ENCODE measurements at regions of chr3 and their contacts with region 1.

Region 1: DNA sequence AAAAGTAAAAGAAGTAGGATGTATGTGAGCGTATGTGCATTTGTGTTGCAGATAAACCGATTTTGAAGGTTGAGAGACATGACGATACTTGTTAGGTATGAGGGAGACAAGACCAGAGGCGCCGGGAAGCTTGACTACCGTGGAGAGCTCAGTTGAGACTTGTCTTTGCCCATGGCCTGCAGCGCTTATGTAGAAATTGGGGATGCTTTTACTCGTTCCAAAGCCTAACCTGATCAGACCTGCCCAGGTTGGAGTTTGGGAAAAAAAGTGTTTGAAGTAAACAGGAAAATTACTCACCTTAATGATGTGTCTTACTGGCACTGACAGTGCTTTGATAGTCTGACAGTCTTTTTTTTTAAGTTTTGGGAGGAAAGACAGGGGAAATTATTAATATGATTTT is 202.8 kb downstream of the TP63 start:
- DNase-seq: peak in 1 of 2 donors; percentile 89
- H3K4me3 ChIP-seq: no peak overlapping the region
- H3K27ac ChIP-seq: peak overlapping the region; percentile 54 to 71
- H3K4me1 ChIP-seq: no peaks in the 10 kb centered on the region
- H3K27me3 ChIP-seq: no peaks in the 10 kb centered on the region
- CTCF ChIP-seq: no peak
- POLR2A ChIP-seq: no peak

Region 2: GRCh38 chr3:189547448-189547847 is 286.5 kb before region 1 on chr3:
- intact Hi-C with region 1: loop called (anchors 5 kb)
- DNase-seq: no peak
- H3K4me3 ChIP-seq: no peak overlapping the region
- H3K27ac ChIP-seq: no peak overlapping the region
- H3K4me1 ChIP-seq: no peaks in the 10 kb centered on the region
- H3K27me3 ChIP-seq: no peaks in the 10 kb centered on the region
- CTCF ChIP-seq: no peak
- POLR2A ChIP-seq: no peak

Measured in breast epithelium (tissue), 4 donors.